ENCODE measurements at regions of chr6 and their contacts with region 1.

Region 1: GRCh38 chr6:111259089-111259831 is 172.0 kb downstream of the SLC16A10 start:
- DNase-seq: peak; percentile 98 to 99
- H3K4me3 ChIP-seq: peak overlapping the region; percentile 60
- H3K4me3 Mint-ChIP-seq: peak overlapping the region; percentile 77
- H3K27ac Mint-ChIP-seq: peak overlapping the region; percentile 76
- H3K4me1 ChIP-seq: peaks cover 13% of the 10 kb centered on the region
- H3K4me1 Mint-ChIP-seq: peaks cover 14% of the 10 kb centered on the region
- H3K27me3 ChIP-seq: no peaks in the 10 kb centered on the region
- H3K27me3 Mint-ChIP-seq: no peaks in the 10 kb centered on the region
- CTCF ChIP-seq: peak; percentile 82 to 92

Region 2: DNA sequence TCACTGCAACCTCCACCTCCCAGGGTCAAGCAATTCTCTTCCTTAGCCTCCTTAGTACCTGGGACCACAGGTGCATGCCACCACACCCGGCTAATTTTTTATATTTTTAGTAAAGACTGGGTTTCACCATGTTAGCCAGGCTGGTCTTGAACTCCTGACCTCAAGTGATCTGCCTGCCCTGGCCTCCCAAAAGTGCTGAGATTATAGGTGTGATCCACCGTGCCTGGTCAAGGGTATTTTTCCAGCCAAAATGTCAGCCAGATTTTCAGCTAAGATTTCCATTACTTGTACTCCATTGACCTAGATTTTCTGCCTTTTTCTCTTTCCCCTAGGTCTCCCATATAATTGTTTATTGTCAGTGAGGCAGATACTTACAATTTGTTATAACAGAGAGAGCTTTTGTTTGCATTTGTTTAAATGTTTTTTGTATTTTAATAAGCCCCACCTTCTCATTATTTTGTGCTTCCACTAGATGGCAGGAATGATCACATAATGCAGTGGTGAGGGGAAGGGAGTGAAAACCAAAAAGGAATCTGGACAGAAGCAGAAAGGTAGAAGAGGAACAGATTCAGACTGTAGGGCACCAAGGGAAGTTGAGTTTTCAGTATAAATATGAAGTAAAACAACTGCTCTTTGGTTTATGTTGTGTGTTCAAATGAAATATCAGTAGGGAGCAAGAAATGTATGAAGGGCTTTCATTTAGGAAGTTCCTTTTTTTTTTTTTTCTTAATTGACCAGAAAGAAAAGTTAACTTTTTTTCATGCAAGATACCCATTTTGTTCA is 247.7 kb before region 1 on chr6:
- CTCF ChIA-PET with region 1: interaction called, 7 read pairs
- POLR2A ChIA-PET with region 1: no interaction called
- intact Hi-C with region 1: loop called (anchors 1 kb)
- DNase-seq: peak in 1 of 2 experiments; percentile 43
- H3K4me3 ChIP-seq: no peak overlapping the region
- H3K4me3 Mint-ChIP-seq: no peak overlapping the region
- H3K27ac Mint-ChIP-seq: no peak overlapping the region
- H3K4me1 ChIP-seq: no peaks in the 10 kb centered on the region
- H3K4me1 Mint-ChIP-seq: no peaks in the 10 kb centered on the region
- H3K27me3 ChIP-seq: no peaks in the 10 kb centered on the region
- H3K27me3 Mint-ChIP-seq: no peaks in the 10 kb centered on the region
- CTCF ChIP-seq: peak; percentile 62 to 67

Region 3: DNA sequence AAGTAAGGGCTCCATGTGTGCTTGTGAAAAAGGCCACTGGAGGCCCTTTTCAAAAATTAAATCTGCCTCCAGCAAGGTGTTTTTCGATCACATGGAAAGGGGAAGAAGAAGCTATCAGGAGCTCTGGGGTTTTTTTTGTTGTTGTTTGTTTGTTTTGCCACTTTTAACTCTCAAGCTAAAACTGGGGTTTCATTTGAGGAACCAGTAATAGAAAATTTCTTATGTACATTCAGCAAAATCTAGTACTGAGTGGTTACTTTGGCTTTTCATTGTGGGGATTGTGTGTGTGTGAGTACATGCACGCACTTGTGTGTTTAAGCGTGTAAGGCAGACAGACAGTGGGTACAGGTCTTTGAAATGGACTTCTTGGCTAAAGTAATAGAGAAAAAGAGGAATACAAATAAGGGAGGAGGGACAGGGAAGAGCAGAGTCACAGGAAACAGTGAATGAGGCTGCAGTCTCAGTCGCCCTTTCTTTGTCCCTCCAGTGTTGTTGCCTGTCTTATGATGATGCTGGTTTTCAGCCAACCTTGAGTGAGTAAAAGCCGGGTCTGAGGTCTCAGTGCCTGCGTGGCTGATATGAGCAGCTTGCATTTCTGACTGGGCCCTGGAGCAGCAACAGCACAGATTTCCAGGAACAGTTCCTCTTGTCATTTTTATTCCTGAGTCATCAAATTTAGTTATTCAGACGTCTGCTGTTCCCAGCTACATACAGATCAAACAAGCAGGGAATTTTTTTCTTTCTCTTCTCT is 145.7 kb before region 1 on chr6:
- CTCF ChIA-PET with region 1: no interaction called
- POLR2A ChIA-PET with region 1: interaction called, 15 read pairs
- intact Hi-C with region 1: no loop called
- DNase-seq: no peak
- H3K4me3 ChIP-seq: no peak overlapping the region
- H3K4me3 Mint-ChIP-seq: no peak overlapping the region
- H3K27ac Mint-ChIP-seq: no peak overlapping the region
- H3K4me1 ChIP-seq: no peaks in the 10 kb centered on the region
- H3K4me1 Mint-ChIP-seq: no peaks in the 10 kb centered on the region
- H3K27me3 ChIP-seq: no peaks in the 10 kb centered on the region
- H3K27me3 Mint-ChIP-seq: no peaks in the 10 kb centered on the region
- CTCF ChIP-seq: no peak

Region 4: GRCh38 chr6:111306104-111306888 is 47.0 kb after region 1 on chr6:
- CTCF ChIA-PET with region 1: interaction called, 3 read pairs
- POLR2A ChIA-PET with region 1: interaction called, 5 read pairs
- intact Hi-C with region 1: loop called (anchors 2 kb)
- DNase-seq: peak in 1 of 2 experiments; percentile 15
- H3K4me3 ChIP-seq: no peak overlapping the region
- H3K4me3 Mint-ChIP-seq: no peak overlapping the region
- H3K27ac Mint-ChIP-seq: no peak overlapping the region
- H3K4me1 ChIP-seq: no peaks in the 10 kb centered on the region; the same call in 1 of the 2 replicates
- H3K4me1 Mint-ChIP-seq: no peaks in the 10 kb centered on the region
- H3K27me3 ChIP-seq: no peaks in the 10 kb centered on the region
- H3K27me3 Mint-ChIP-seq: no peaks in the 10 kb centered on the region
- CTCF ChIP-seq: no peak

Region 5: GRCh38 chr6:111388681-111389080 is 129.4 kb after region 1 on chr6:
- CTCF ChIA-PET with region 1: no interaction called
- POLR2A ChIA-PET with region 1: no interaction called
- intact Hi-C with region 1: loop called (anchors 1 kb)
- DNase-seq: no peak
- H3K4me3 ChIP-seq: no peak overlapping the region
- H3K4me3 Mint-ChIP-seq: no peak overlapping the region
- H3K27ac Mint-ChIP-seq: no peak overlapping the region
- H3K4me1 ChIP-seq: no peaks in the 10 kb centered on the region; the same call in 1 of the 2 replicates
- H3K4me1 Mint-ChIP-seq: peaks cover 7% of the 10 kb centered on the region
- H3K27me3 ChIP-seq: no peaks in the 10 kb centered on the region
- H3K27me3 Mint-ChIP-seq: no peaks in the 10 kb centered on the region
- CTCF ChIP-seq: no peak

Region 6: DNA sequence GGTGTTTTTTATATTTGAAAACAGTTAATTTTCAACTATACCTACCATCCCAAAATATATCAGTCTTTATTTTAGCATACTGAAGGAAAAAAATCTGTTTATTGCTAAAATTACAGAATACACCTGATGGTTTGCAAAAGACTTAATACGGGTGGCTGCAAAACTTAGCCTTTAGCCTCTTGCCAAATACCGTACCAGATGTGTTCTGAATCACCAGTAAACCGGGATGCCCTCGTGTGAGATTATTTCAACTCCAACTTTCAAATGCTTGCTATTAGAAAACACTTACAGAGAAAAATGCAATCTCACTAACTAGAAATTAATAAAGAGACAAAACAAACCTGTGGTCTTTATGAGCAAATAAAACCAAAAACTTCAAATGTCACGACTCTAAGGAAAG is 187.8 kb after region 1 on chr6:
- CTCF ChIA-PET with region 1: no interaction called
- POLR2A ChIA-PET with region 1: no interaction called
- intact Hi-C with region 1: no loop called
- DNase-seq: no peak
- H3K4me3 ChIP-seq: no peak overlapping the region
- H3K4me3 Mint-ChIP-seq: no peak overlapping the region
- H3K27ac Mint-ChIP-seq: no peak overlapping the region
- H3K4me1 ChIP-seq: peaks cover 6% of the 10 kb centered on the region; the same call in 1 of the 2 replicates
- H3K4me1 Mint-ChIP-seq: no peaks in the 10 kb centered on the region
- H3K27me3 ChIP-seq: no peaks in the 10 kb centered on the region
- H3K27me3 Mint-ChIP-seq: no peaks in the 10 kb centered on the region
- CTCF ChIP-seq: no peak

Region 7: GRCh38 chr6:111642463-111643158 is 383.4 kb after region 1 on chr6:
- CTCF ChIA-PET with region 1: interaction called, 4 read pairs
- POLR2A ChIA-PET with region 1: no interaction called
- intact Hi-C with region 1: loop called (anchors 2 kb)
- DNase-seq: peak in 1 of 2 experiments; percentile 55
- H3K4me3 ChIP-seq: no peak overlapping the region
- H3K4me3 Mint-ChIP-seq: no peak overlapping the region
- H3K27ac Mint-ChIP-seq: no peak overlapping the region
- H3K4me1 ChIP-seq: no peaks in the 10 kb centered on the region
- H3K4me1 Mint-ChIP-seq: no peaks in the 10 kb centered on the region
- H3K27me3 ChIP-seq: no peaks in the 10 kb centered on the region
- H3K27me3 Mint-ChIP-seq: no peaks in the 10 kb centered on the region
- CTCF ChIP-seq: peak in 1 of 2 experiments; percentile 44

Measured in Caco-2 (cell line).